HAP-1 (cell line): ENCODE measurements at regions of chr2 and their contacts with region 1.

Region 1: DNA sequence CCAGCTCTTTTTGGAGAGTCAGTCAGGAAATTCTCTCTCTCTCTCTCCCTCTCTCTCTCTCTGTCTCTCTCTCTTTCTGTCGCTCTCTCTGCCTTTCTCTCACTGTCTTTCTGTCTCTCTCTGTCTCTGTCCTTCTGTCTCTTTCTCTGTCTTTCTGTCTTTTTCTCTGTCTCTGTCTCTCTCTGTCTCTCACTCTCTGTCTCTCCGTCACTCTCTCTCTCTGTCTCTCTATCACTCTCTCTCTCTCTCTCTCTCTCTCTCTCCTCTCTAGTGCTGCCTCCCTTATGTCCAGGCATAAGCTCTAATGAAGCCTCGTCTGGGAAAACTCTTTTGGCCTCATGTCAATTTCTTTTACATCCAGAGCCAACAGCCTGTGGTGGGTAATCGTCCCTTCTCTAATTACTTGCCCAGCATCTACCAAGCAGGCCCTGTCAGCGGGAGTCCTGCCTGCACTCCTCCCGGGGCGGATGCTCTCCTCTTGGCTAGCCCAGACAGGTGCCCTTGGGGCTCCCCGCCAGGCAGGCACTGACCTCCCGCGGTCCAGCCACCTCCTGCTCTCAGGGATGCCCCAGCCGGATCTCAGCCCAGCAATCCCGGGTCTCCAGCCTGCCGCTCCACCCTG is 74.1 kb downstream of the NCAPH start:
- DNase-seq: no peak
- H3K4me3 ChIP-seq: no peak overlapping the region
- H3K4me1 ChIP-seq: peaks cover 25% of the 10 kb centered on the region
- H3K27me3 ChIP-seq: no peaks in the 10 kb centered on the region

Region 2: DNA sequence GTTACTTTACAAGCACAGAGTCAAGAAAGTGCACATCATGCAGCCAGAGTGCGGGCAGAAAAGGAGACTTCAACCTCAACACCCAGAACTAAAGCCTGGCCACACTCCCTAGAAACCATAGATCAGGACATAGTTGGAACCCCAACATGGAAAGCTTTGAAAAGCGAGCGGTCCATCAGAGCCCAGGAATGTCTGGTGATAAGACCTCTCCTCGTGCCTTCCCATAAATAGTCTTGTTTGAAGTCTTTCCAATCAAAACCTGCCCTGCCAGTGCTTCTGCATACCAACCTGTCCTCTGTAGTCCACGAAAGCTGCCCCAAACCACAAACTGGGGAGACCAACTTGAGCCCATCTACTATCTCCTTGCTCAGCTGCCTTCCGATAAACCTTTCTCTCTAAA is 40.0 kb after region 1 on chr2:
- in situ Hi-C with region 1: no loop called
- DNase-seq: no peak
- H3K4me3 ChIP-seq: no peak overlapping the region
- H3K4me1 ChIP-seq: no peaks in the 10 kb centered on the region
- H3K27me3 ChIP-seq: no peaks in the 10 kb centered on the region

Region 3: DNA sequence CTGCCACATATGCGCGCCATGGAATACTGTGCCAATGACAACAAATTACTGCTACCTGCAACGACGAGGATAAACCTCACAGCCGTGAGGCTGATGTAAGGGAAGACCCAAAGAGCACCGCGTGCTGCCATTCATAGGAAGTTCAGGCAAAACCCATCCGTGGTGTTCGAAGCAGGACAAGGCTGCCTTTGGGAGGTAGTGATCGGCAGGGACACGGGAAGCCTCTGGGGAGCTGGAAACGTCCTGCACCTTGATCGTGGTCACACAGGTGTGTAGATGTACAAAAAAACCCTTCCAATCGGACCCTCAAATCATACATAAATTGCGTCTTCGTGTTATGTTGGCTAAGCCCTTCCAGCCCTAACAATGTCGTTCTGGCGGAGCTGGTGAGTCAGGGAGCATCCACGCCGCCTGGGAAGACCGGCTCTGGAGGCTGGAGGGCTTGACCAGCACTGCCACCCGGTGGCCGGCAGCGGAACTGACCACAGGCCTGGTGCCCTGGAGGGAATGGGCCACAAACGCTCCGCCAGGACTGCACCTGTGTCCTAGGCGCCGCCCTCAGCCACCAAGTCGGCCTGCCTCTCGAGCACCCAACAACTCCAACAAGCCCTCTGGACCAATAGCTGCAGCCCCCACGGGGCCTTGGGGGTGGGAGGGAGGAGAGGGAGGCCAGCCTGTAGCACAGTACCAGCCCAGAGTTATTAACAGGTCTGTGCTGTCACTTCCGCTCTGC is 99.6 kb after region 1 on chr2:
- in situ Hi-C with region 1: loop called (anchors 5 kb)
- DNase-seq: peak; percentile 84 to 94
- H3K4me3 ChIP-seq: no peak overlapping the region
- H3K4me1 ChIP-seq: peaks cover 8% of the 10 kb centered on the region; the same call in 1 of the 2 replicates
- H3K27me3 ChIP-seq: no peaks in the 10 kb centered on the region